ENCODE measurements at regions of chr17 and their contacts with region 1.

Region 1: GRCh38 chr17:35808962-35809854 is at the start of gene TAF15:
- H3K4me3 ChIP-seq: peak within 1 kb of the TSS; percentile 98
- H3K27ac ChIP-seq: peak within 1 kb of the TSS; percentile 96
- H3K4me1 ChIP-seq: peaks cover 15% of the 10 kb centered on the region
- CTCF ChIP-seq: peak; percentile 88

Region 2: DNA sequence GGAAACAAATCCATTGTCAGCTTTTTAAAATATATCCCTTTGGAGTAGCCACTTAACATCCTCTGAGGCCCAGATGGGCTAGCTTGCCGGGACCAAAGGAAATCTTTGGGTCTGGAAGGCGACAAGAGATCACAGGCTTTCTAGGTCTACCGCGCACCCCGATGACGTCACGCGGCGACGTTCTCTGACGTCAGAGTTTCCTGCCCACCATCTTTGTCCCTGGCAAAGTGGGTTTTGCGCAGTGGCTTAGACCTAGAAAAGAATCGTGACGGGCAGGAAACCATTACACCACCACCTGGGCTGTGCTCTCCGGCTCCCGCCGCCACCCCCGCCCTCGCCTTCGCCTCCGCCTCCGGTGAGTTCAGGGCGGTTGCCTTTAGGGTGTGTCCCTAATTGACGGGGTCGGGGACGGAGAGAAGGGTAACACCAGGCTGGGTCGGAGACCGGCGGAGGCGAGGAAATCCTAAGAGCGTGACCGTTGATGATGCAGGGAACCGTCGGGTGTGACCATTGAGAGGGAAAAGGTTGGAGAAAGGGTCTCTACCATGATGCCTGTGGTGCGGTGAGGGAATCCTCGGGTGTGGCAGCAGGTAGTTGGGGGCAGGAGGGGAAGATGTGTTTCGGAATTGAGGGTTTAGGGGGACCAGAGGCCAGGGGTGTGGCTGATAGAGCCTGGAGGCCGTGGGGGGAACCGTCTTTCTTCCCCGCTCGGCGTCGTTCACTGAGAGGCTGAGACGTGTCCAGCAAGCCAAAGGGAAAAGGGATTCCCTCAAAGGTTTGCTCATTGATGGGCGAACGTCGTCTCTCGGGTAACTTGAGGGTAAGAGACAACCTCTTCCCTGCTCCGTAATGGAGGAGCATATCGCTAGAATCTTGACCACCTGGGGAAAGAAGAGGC is 221.9 kb before region 1 on chr17 and contains the start of gene AP2B1:
- CTCF ChIA-PET with region 1: no interaction called
- POLR2A ChIA-PET with region 1: interaction called, 10 read pairs
- H3K4me3 ChIP-seq: peak within 1 kb of the TSS; percentile 56
- H3K27ac ChIP-seq: peak within 1 kb of the TSS; percentile 88
- H3K4me1 ChIP-seq: peaks cover 15% of the 10 kb centered on the region; the same call in 1 of the 2 replicates
- CTCF ChIP-seq: peak; percentile 42; the same call in 1 of the 2 replicates

Region 3: GRCh38 chr17:35774499-35774898 is 34.7 kb before region 1 on chr17:
- CTCF ChIA-PET with region 1: interaction called, 12 read pairs
- POLR2A ChIA-PET with region 1: interaction called, 7 read pairs
- H3K4me3 ChIP-seq: no peak overlapping the region
- H3K27ac ChIP-seq: no peak overlapping the region; the same call in 1 of the 2 replicates
- H3K4me1 ChIP-seq: peaks cover 10% of the 10 kb centered on the region; the same call in 1 of the 2 replicates
- CTCF ChIP-seq: no peak

Region 4: GRCh38 chr17:35794988-35795824 is 14.0 kb before region 1 on chr17 and contains the start of gene MMP28:
- CTCF ChIA-PET with region 1: interaction called, 23 read pairs
- POLR2A ChIA-PET with region 1: interaction called, 46 read pairs
- H3K4me3 ChIP-seq: peak within 1 kb of the TSS; percentile 37
- H3K27ac ChIP-seq: no peak within 1 kb of the TSS; the same call in 1 of the 2 replicates
- H3K4me1 ChIP-seq: no peaks in the 10 kb centered on the region
- CTCF ChIP-seq: no peak

Region 5: DNA sequence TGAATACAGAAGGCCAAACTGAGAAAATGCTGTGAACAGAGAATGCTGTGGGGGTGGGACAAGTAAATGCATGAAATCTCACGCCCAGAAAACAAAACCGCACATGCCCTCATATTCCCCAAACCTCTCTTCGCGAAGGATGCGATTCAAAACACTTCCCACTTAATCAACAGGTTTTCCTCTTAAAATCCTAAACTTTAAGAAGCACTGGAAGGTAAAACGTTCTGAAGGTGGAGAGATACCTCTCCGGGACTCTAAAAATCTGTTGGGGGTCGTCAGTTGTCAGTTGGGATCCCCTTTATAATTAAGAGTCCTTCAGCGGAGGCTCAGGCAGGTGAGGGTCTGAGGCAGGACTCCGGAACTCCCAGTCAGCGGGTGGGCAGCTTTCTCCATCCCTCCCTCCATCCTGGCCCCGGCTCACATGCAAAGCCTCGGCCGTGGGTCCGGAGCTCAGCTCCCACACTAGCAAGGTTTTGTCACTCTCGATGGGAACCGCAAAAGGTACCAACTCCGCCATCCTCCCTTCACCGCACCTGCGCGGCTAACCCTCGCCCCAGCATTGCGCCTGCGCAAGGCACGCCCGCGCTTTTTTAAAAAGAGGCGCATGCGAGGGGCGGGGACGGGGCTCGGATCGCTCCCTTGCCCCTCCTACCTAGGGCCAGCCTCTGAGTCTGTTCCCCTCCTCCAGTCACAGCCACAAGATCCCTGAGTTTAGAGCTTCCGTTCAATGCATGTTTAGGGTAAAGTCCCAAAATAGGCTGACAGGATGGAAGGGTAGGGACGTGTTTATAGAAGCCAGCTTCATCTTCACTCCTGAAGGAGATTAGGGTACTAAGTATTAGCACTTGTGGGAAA is 121.2 kb after region 1 on chr17 and contains the start of gene RDM1:
- CTCF ChIA-PET with region 1: no interaction called
- POLR2A ChIA-PET with region 1: interaction called, 14 read pairs
- H3K4me3 ChIP-seq: peak within 1 kb of the TSS; percentile 73
- H3K27ac ChIP-seq: peak within 1 kb of the TSS; percentile 0; the same call in 1 of the 2 replicates
- H3K4me1 ChIP-seq: peaks cover 7% of the 10 kb centered on the region
- CTCF ChIP-seq: no peak

Measured in HEK293 (cell line).